ENCODE measurements at regions of chr10 and their contacts with region 1.

Region 1: GRCh38 chr10:62038609-62039190 is 137.2 kb downstream of the ARID5B start:
- DNase-seq: peak; percentile 89
- ATAC-seq: peak; percentile 73
- H3K4me3 Mint-ChIP-seq: peak overlapping the region; percentile 45
- H3K27ac Mint-ChIP-seq: peak overlapping the region; percentile 81
- H3K4me1 Mint-ChIP-seq: peaks cover 62% of the 10 kb centered on the region
- H3K27me3 Mint-ChIP-seq: no peaks in the 10 kb centered on the region

Region 2: GRCh38 chr10:61987951-61988379 is 50.7 kb before region 1 on chr10:
- CTCF ChIA-PET with region 1: interaction called, 10 read pairs
- DNase-seq: peak; percentile 61
- ATAC-seq: peak; percentile 91
- H3K4me3 Mint-ChIP-seq: peak overlapping the region; percentile 60
- H3K27ac Mint-ChIP-seq: peak overlapping the region; percentile 97
- H3K4me1 Mint-ChIP-seq: peaks cover 71% of the 10 kb centered on the region
- H3K27me3 Mint-ChIP-seq: no peaks in the 10 kb centered on the region

Region 3: GRCh38 chr10:62050893-62051433 is 12.3 kb after region 1 on chr10:
- CTCF ChIA-PET with region 1: interaction called, 50 read pairs
- DNase-seq: peak; percentile 92
- ATAC-seq: peak; percentile 60
- H3K4me3 Mint-ChIP-seq: peak overlapping the region; percentile 83
- H3K27ac Mint-ChIP-seq: peak overlapping the region; percentile 99
- H3K4me1 Mint-ChIP-seq: peaks cover 93% of the 10 kb centered on the region
- H3K27me3 Mint-ChIP-seq: no peaks in the 10 kb centered on the region

Region 4: GRCh38 chr10:62244780-62245467 is 206.2 kb after region 1 on chr10:
- CTCF ChIA-PET with region 1: interaction called, 148 read pairs
- DNase-seq: peak; percentile 74
- ATAC-seq: peak; percentile 82
- H3K4me3 Mint-ChIP-seq: peak overlapping the region; percentile 42
- H3K27ac Mint-ChIP-seq: peak overlapping the region; percentile 82
- H3K4me1 Mint-ChIP-seq: peaks cover 33% of the 10 kb centered on the region
- H3K27me3 Mint-ChIP-seq: no peaks in the 10 kb centered on the region